Dorsolateral prefrontal cortex (tissue), 120 donors: ENCODE measurements at regions of chr6 and their contacts with region 1.

Region 1: GRCh38 chr6:132749111-132749510 is 8.6 kb downstream of the VNN2 start:
- DNase-seq: no peak
- H3K4me3 ChIP-seq: no peak overlapping the region
- H3K27ac ChIP-seq: no peak overlapping the region
- H3K27me3 ChIP-seq: peaks cover 0 to 3% (median 0%) of the 10 kb centered on the region in 45 donors
- CTCF ChIP-seq: no peak

Region 2: GRCh38 chr6:133360194-133360593 is 611.1 kb after region 1 on chr6:
- intact Hi-C with region 1: no loop called
- DNase-seq: no peak
- H3K4me3 ChIP-seq: peak overlapping the region in 5 of 59 donors; percentile 1 to 31 (median 12)
- H3K27ac ChIP-seq: no peak overlapping the region
- H3K27me3 ChIP-seq: no peaks in the 10 kb centered on the region
- CTCF ChIP-seq: no peak

Region 3: DNA sequence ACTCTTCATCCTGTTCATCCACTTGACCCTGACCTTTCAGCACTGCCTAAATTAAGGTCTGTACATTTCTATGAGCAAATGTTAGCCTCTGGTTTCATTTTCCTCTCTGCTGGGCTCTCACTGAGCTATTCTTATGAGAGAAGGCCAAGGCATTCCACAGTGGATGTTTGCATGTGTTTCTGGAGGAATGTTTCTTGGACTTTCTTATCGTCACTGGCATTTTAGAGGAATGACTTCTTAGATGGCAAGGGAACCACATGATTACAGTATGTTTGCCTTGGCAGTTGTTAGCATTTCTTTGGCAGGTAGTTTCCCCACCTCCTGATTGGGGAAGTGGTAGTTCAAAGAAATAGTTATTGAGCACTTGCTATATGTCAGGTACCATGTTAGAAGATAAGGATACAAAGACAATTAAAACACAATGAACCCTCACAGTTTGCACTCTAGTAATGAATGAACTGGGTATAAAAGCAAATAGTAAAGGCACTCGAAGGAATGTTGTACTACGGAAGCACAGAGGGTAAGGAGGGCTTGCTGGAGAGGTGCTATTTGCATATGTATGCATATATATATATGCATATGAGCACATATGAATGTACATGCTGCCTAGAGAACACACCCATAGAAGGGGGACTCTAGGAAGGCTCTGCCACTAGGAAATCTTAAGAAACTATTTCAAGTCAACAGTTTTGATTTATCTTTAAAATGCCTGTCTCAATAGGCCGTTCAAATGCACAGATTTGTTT is 799.5 kb after region 1 on chr6:
- intact Hi-C with region 1: loop called in 1 of 2 experiments (anchors 5 kb)
- DNase-seq: no peak
- H3K4me3 ChIP-seq: no peak overlapping the region
- H3K27ac ChIP-seq: no peak overlapping the region
- H3K27me3 ChIP-seq: peaks cover 0 to 3% (median 0%) of the 10 kb centered on the region in 45 donors
- CTCF ChIP-seq: no peak